Transverse colon (tissue), 4 donors: ENCODE measurements at regions of chr3 and their contacts with region 1.

Region 1: DNA sequence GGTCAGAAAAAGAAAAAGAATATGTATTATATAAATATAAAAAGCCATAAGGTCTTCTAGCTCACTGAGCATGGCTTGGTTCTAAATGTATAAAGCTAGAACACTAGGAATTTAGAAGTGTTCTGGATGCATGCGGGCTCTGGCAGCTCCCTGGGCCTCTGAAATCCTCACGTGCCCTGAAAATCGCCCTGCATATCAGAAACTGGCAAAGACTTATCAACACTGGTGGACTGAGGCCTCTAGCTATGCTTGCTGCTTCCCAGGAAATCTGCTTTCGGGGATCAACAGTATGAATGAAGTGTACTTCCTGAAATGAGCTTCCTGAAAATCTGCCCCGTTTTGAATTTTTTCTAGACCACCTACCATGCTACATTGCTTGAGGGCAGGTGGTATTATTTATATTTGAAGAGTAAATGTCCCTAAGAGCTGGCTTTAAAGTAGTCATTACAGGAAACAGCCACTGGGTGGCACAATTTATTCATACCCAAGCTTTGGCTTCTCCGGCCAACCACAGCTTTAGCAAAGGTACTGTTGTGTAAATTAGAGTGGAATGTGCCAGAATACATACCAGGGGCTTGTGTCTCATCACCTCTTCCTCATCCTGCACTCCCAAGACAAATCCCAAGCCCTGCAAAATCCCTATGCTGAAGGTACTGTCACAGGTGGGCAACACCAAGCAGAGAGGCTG is 17.7 kb downstream of the CRTAP start:
- DNase-seq: no peak
- H3K4me3 ChIP-seq: no peak overlapping the region
- H3K27ac ChIP-seq: no peak overlapping the region
- H3K4me1 ChIP-seq: no peaks in the 10 kb centered on the region
- H3K27me3 ChIP-seq: no peaks in the 10 kb centered on the region
- CTCF ChIP-seq: peak; percentile 64 to 80 (median 72)
- EP300 ChIP-seq: no peak
- POLR2A ChIP-seq: no peak

Region 2: GRCh38 chr3:33360136-33360825 is 228.8 kb after region 1 on chr3:
- in situ Hi-C with region 1: loop called in 2 of 4 experiments (anchors 10 to 25 kb)
- intact Hi-C with region 1: no loop called
- DNase-seq: no peak
- H3K4me3 ChIP-seq: no peak overlapping the region
- H3K27ac ChIP-seq: no peak overlapping the region
- H3K4me1 ChIP-seq: peaks cover 0 to 17% (median 10%) of the 10 kb centered on the region in 4 donors
- H3K27me3 ChIP-seq: no peaks in the 10 kb centered on the region
- CTCF ChIP-seq: no peak
- EP300 ChIP-seq: no peak
- POLR2A ChIP-seq: no peak

Region 3: DNA sequence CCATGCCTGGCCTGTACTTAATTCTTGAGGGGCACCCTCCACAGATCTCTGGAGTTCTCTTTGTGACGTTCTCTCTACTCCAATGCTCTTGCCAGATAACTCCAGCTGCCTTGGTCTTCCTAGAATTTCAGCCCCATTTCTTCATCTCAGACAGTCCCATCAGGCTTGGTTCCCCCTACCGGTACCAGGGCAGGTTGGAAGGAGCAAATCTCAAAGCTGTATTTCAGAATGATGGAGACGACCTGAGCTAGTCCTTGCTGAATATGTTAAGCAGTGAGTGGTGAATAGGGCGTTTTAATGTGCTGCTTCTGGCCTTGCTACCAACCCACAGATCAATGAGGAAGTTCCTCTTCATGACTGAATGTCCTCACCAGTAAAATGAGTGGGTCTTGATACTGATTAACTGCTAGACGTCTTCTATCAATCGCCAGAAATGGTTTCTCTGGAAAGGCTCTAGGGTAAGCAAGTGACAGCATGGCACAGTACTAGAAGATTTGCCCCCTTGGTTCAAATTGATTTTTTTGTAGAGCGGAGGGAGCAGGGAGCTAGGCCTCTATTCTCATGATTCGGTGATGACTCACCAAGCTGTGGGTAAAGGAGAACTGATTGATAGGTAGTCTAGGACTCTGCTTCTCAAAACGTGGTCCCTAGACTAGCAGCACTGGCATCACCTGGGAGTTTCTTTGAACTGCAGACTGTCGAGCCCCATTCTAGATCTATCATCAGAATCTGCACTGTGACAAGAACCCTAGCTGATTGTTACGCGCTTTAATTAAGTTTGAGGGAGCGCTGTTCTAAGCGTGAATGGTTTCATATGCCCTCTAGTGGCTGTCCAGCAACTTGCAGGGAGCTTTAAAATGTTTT is 241.0 kb after region 1 on chr3:
- in situ Hi-C with region 1: loop called in 3 of 4 experiments (anchors 10 to 25 kb)
- intact Hi-C with region 1: loop called (anchors 5 kb)
- DNase-seq: peak; percentile 30
- H3K4me3 ChIP-seq: no peak overlapping the region
- H3K27ac ChIP-seq: no peak overlapping the region
- H3K4me1 ChIP-seq: peaks cover 0 to 6% (median 2%) of the 10 kb centered on the region in 4 donors
- H3K27me3 ChIP-seq: no peaks in the 10 kb centered on the region
- CTCF ChIP-seq: peak; percentile 80 to 92 (median 86)
- EP300 ChIP-seq: no peak
- POLR2A ChIP-seq: no peak

Region 4: GRCh38 chr3:33385423-33385822 is 253.9 kb after region 1 on chr3:
- in situ Hi-C with region 1: loop called in 1 of 4 experiments (anchors 10 kb)
- intact Hi-C with region 1: no loop called
- DNase-seq: no peak
- H3K4me3 ChIP-seq: no peak overlapping the region
- H3K27ac ChIP-seq: no peak overlapping the region
- H3K4me1 ChIP-seq: no peaks in the 10 kb centered on the region
- H3K27me3 ChIP-seq: no peaks in the 10 kb centered on the region
- CTCF ChIP-seq: no peak
- EP300 ChIP-seq: no peak
- POLR2A ChIP-seq: no peak

Region 5: DNA sequence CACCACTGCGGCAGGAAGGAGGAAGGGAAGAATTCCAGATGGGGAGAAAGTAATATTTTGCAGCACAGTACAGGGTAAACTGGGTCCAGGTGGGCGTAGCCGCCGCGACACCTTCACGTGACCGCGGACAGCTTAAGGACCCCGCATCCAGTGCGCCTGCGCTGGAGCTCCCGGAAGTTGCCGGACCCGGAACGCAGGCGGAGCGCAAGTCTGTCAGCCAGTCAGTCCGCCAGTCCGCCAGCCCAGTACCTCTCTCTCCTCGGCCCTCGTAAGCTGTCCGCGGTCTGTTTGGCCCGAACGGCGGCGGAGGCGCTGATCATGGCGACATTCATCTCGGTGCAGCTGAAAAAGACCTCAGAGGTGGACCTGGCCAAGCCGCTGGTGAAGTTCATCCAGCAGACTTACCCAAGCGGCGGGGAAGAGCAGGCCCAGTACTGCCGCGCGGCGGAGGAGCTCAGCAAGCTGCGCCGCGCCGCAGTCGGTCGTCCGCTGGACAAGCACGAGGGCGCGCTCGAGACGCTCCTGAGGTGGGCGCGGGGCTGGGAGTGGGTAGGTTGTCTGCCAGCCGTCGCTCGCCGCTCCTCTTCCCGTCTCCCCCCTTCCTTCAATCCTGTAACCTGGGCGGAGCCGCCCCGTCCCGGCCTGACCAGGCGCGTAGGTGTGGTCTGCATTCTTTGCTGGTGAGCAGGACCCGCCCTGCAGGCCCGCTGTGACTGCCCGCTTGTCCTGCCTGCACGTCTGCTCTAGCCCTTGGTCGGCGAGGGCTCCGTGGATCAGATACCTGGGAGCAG is 667.1 kb after region 1 on chr3 and contains the start of gene PDCD6IP:
- in situ Hi-C with region 1: loop called in 1 of 4 experiments (anchors 25 kb)
- intact Hi-C with region 1: no loop called
- DNase-seq: peak; percentile 95
- H3K4me3 ChIP-seq: peak within 1 kb of the TSS; percentile 55 to 84 (median 75)
- H3K27ac ChIP-seq: peak within 1 kb of the TSS; percentile 91 to 98 (median 97)
- H3K4me1 ChIP-seq: peaks cover 9 to 51% (median 37%) of the 10 kb centered on the region in 4 donors
- H3K27me3 ChIP-seq: no peaks in the 10 kb centered on the region
- CTCF ChIP-seq: peak in 3 of 5 experiments; percentile 14 to 44 (median 33)
- EP300 ChIP-seq: no peak
- POLR2A ChIP-seq: peak; percentile 99
- total RNA-seq, gene PDCD6IP: 89.0 to 523 (median 372) TPM

Region 6: DNA sequence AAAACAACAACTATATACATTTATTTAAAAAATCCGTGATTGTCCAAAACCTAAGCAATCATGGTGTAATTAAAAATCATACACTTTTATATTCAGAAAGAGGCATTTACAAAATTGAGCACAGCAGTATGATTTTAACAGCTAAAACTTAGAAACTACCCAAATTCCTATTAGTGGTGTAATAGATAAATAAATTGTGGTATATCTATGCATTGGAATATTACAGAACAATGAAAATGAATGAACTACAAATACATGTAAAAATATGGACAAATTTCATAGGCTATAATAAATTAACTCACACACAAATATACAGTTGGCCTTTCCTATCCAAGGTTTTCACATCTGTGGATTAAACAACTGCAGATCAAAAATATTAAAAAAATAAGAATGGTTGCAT is 1807.3 kb after region 1 on chr3:
- in situ Hi-C with region 1: no loop called
- intact Hi-C with region 1: no loop called
- DNase-seq: no peak
- H3K4me3 ChIP-seq: no peak overlapping the region
- H3K27ac ChIP-seq: no peak overlapping the region
- H3K4me1 ChIP-seq: no peaks in the 10 kb centered on the region
- H3K27me3 ChIP-seq: no peaks in the 10 kb centered on the region
- CTCF ChIP-seq: no peak
- EP300 ChIP-seq: no peak
- POLR2A ChIP-seq: no peak